Heart left ventricle (tissue), 16 donors: ENCODE measurements at regions of chr2 and their contacts with region 1.

Region 1: DNA sequence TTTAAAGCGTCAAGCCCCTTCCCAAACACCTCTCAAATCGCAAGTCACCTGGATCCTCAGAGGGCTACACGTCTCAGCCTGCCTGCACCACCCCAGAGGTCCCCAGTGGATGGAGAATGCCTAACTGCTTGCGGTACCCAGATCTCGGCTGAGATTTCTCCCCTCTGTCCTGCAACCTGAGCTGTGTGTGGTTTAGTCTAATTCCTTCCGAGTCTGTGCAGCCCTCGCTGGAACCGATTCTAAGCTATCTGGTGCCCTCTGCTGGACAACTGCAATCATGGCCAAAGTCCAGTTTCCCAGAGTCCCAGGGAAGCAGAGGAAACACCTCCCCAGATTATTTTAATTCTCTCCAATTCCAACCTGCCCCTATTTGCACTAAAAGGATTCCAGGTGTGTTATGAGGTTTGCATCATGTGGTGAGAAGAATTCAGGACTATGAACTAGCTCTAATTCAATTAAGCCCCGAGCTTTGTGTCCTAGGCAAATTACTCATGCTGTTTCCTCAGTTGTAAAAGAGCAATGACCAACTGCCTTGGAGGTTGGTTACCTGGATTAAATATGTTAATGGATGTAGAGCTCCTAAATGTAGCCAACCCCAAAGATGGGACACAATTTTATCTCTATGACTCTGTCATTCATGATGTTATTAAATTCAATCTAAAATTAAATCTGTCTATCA is 276.1 kb upstream of the NCKAP5 start:
- DNase-seq: peak in 4 of 5 donors; percentile 49 to 54 (median 49)
- ATAC-seq: peak; percentile 37 to 77 (median 68)
- H3K4me3 ChIP-seq: no peak overlapping the region
- H3K27ac ChIP-seq: no peak overlapping the region
- H3K4me1 ChIP-seq: peaks cover 0 to 22% (median 4%) of the 10 kb centered on the region in 12 donors
- H3K27me3 ChIP-seq: no peaks in the 10 kb centered on the region
- CTCF ChIP-seq: peak; percentile 75 to 87 (median 85)
- POLR2A ChIP-seq: no peak

Region 2: GRCh38 chr2:132267105-132267497 is 1577.3 kb before region 1 on chr2:
- intact Hi-C with region 1: loop called in 4 of 10 experiments (anchors 5 to 10 kb)
- DNase-seq: no peak
- ATAC-seq: no peak
- H3K4me3 ChIP-seq: peak overlapping the region in 1 of 12 donors; percentile 49
- H3K27ac ChIP-seq: no peak overlapping the region
- H3K4me1 ChIP-seq: peaks cover 0 to 13% (median 3%) of the 10 kb centered on the region in 12 donors
- H3K27me3 ChIP-seq: peaks cover 0 to 44% (median 5%) of the 10 kb centered on the region in 9 donors
- CTCF ChIP-seq: no peak
- POLR2A ChIP-seq: no peak

Region 3: DNA sequence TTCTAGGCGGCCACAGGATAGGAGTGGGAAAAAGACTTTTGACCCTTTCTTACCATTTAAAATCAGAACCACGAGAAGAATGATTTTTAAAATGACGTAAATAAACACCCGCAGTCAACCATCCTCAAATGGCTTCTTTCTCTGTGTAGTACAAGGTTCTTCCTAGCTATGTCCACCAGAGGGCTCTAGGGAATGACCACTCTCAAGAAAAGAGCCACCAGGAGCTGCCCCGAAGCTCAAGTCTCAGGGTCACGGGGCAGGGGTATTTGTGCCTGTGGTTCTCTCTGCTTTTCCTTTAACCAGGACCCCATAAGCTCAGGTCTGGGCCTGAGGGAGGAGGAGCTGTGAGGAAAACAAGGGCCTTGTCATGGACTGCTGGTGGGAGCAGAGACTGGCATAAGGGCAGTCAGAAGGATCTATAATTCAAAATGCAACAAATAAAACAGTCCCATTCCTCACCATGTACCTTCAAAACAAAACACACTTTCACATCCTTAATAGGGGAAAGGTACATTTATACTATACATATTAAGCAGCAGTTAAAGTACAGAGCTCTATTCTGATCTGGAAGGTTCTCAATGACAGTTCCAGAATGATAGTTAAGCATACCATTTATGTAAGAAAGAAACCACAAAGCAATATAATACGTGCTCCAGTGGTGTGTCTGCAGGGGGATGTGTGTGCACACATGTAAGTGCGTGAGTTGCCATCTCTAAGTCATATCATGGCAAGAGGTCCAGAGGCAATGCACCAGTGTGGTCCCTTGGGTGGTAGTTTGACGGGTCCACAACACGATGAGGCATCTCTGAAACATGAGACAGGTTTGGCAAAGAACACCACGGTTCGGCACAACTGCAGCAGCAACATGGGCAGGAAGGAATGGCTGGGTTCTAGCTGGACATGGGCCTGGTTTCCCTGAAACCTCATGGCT is 1193.0 kb before region 1 on chr2:
- intact Hi-C with region 1: loop called in 2 of 10 experiments (anchors 10 kb)
- DNase-seq: no peak
- ATAC-seq: peak in 1 of 4 donors; percentile 57
- H3K4me3 ChIP-seq: no peak overlapping the region
- H3K27ac ChIP-seq: no peak overlapping the region
- H3K4me1 ChIP-seq: no peaks in the 10 kb centered on the region
- H3K27me3 ChIP-seq: peaks cover 0 to 9% (median 0%) of the 10 kb centered on the region in 9 donors
- CTCF ChIP-seq: peak in 9 of 12 donors; percentile 24 to 73 (median 49)
- POLR2A ChIP-seq: no peak

Region 4: GRCh38 chr2:133255360-133255759 is 589.0 kb before region 1 on chr2:
- intact Hi-C with region 1: loop called in 2 of 10 experiments (anchors 10 kb)
- DNase-seq: no peak
- ATAC-seq: no peak
- H3K4me3 ChIP-seq: no peak overlapping the region
- H3K27ac ChIP-seq: no peak overlapping the region
- H3K4me1 ChIP-seq: no peaks in the 10 kb centered on the region
- H3K27me3 ChIP-seq: no peaks in the 10 kb centered on the region
- CTCF ChIP-seq: no peak
- POLR2A ChIP-seq: no peak

Region 5: DNA sequence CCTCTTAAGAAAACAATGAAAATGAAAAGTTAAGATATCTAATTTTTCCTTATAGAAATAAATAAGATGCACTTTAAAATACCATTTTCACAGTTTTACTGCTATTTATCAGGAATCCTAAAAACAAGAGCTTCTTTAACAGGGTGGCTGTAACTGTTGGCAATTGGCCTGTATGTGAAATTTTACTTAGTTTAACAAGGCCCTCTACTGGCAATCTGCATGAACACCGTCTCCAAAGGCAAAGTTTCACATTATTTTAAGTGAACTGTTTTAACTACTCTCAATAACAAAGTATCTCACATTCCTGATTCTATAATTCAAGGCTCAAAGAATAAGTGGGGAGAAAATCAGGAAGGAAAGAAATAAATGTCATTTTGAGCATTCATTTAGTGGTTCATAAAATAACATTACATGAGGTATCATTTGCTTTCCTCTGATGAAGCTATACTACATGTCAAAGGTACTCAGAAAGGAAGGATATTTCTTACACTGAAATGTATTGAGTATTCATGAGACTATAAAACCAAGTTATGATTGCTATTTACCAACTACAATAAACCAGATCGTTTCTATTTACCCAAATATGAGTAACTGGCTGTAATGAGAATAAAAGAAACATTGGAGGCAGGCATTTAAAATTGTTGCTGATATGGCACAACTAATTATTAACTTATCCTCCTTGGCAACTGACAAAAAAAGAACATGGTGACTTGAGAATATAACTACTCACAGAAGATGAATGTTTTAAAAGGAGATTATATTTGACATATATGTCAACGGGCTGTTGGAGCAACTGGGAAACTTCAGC is 283.1 kb before region 1 on chr2:
- intact Hi-C with region 1: loop called in 2 of 10 experiments (anchors 5 to 10 kb)
- DNase-seq: no peak
- ATAC-seq: peak in 2 of 4 donors; percentile 58 to 62
- H3K4me3 ChIP-seq: no peak overlapping the region
- H3K27ac ChIP-seq: no peak overlapping the region
- H3K4me1 ChIP-seq: peaks cover 0 to 9% (median 2%) of the 10 kb centered on the region in 12 donors
- H3K27me3 ChIP-seq: no peaks in the 10 kb centered on the region
- CTCF ChIP-seq: peak; percentile 23 to 72 (median 62)
- POLR2A ChIP-seq: no peak

Region 6: DNA sequence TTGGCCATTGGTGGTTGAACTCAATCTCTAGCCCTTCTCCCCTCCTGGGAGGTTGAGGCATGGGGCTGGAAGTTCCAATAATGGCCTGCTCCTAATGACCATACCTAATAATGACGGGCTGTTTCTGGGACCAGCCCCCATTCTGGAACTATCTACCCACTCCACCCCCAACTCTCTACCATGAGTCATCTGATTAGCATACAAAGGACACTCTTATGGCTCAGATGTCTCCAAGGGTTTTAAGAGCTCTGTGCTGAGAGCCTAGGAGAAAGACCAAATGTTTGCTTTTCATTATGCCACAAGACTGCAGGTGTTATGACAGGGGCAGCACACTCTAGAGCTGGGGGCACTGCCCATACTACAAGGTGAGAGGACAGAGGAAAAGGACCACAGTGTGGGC is 139.1 kb before region 1 on chr2:
- intact Hi-C with region 1: no loop called
- DNase-seq: no peak
- ATAC-seq: no peak
- H3K4me3 ChIP-seq: no peak overlapping the region
- H3K27ac ChIP-seq: no peak overlapping the region
- H3K4me1 ChIP-seq: no peaks in the 10 kb centered on the region
- H3K27me3 ChIP-seq: no peaks in the 10 kb centered on the region
- CTCF ChIP-seq: no peak
- POLR2A ChIP-seq: no peak